ENCODE measurements at regions of chr1 and their contacts with region 1.

Region 1: DNA sequence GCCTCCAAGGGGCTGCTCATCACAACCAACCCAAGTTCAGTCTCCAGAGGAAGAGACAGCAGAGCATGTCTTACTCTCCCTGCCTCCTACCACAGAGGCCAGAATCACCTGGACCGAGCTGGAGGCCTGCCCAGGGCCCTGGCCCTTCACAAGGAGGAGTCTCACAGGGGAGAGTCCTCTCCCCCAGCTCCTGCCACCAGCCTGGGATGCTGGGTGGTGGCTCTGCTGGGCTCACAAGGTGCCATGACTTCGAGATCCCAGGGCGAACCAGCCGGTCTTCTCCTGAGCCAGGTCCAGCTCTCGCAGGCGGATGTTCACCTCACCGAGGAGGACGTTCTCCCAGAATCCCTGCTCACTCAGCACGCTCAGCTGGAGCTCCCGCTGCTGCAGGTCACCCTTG is 13.0 kb upstream of the PPP1R15B start:
- DNase-seq: no peak
- H3K4me3 ChIP-seq: no peak overlapping the region
- H3K27ac ChIP-seq: no peak overlapping the region
- H3K4me1 ChIP-seq: peaks cover 46% of the 10 kb centered on the region
- H3K27me3 ChIP-seq: no peaks in the 10 kb centered on the region
- CTCF ChIP-seq: no peak

Region 2: DNA sequence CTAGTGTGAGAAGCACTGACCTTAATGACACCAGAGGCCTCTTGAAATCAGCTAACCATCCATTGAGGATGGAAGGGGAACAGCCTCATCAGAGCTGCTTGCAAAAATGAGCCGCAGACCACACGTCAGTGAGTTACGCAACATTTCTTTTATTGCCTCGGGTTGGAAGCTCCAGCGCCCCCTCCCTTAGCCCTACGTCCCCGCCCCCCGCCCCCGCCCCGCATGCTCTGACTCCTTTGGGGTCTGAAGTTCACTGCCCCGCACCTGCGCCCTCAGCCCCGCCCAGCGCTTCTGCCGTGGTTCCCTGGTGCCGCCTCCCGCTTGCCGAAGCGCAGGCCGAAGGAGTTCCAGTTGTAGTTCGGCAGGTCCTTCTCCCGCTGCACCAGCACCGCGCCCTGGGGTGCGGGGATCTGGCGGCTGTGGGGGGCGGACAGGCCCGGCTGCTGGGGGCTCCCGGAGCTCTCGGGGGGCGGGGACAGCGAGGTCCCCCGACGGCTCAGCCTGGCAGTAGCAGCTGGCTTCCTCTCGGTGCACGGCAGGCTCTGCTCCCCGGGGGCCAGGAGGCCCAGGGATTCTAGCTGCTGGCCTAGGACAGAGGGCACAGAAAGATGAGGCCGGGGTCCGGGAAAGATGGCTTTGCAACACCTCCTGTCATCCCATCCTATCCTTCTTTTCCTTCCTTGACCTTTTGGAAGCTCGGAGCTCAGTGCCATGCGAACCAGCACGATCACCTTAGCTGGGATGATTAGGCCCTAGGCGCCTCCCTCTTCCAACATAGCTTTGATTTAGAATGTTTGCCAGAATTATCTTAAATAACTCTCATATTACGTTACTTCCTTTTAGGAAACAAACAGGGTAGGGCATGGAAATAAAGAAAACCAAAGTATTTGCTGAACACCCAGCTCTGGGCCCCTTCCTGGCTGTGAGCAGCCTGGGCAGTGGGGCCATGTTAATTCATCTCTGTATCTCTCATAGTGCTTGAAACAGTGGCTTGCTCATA is 234.1 kb before region 1 on chr1:
- CTCF ChIA-PET with region 1: no interaction called
- POLR2A ChIA-PET with region 1: no interaction called
- intact Hi-C with region 1: no loop called
- DNase-seq: peak in 1 of 2 experiments; percentile 52
- H3K4me3 ChIP-seq: no peak overlapping the region
- H3K27ac ChIP-seq: no peak overlapping the region
- H3K4me1 ChIP-seq: peaks cover 20% of the 10 kb centered on the region
- H3K27me3 ChIP-seq: no peaks in the 10 kb centered on the region
- CTCF ChIP-seq: no peak

Region 3: GRCh38 chr1:204384994-204385352 is 39.6 kb before region 1 on chr1:
- CTCF ChIA-PET with region 1: no interaction called
- POLR2A ChIA-PET with region 1: interaction called, 12 read pairs
- intact Hi-C with region 1: no loop called
- DNase-seq: no peak
- H3K4me3 ChIP-seq: no peak overlapping the region
- H3K27ac ChIP-seq: no peak overlapping the region
- H3K4me1 ChIP-seq: peaks cover 18% of the 10 kb centered on the region
- H3K27me3 ChIP-seq: no peaks in the 10 kb centered on the region
- CTCF ChIP-seq: no peak

Region 4: GRCh38 chr1:204411451-204412204 is 13.0 kb before region 1 on chr1 and contains the start of gene PPP1R15B:
- CTCF ChIA-PET with region 1: interaction called, 13 read pairs
- POLR2A ChIA-PET with region 1: interaction called, 4 read pairs
- intact Hi-C with region 1: loop called (anchors 1 kb)
- DNase-seq: peak; percentile 97
- H3K4me3 ChIP-seq: peak within 1 kb of the TSS; percentile 94
- H3K27ac ChIP-seq: peak within 1 kb of the TSS; percentile 89
- H3K4me1 ChIP-seq: peaks cover 28% of the 10 kb centered on the region
- H3K27me3 ChIP-seq: no peaks in the 10 kb centered on the region
- CTCF ChIP-seq: no peak
- total RNA-seq, gene PPP1R15B: 37.3 and 40.9 TPM in 2 replicates

Region 5: DNA sequence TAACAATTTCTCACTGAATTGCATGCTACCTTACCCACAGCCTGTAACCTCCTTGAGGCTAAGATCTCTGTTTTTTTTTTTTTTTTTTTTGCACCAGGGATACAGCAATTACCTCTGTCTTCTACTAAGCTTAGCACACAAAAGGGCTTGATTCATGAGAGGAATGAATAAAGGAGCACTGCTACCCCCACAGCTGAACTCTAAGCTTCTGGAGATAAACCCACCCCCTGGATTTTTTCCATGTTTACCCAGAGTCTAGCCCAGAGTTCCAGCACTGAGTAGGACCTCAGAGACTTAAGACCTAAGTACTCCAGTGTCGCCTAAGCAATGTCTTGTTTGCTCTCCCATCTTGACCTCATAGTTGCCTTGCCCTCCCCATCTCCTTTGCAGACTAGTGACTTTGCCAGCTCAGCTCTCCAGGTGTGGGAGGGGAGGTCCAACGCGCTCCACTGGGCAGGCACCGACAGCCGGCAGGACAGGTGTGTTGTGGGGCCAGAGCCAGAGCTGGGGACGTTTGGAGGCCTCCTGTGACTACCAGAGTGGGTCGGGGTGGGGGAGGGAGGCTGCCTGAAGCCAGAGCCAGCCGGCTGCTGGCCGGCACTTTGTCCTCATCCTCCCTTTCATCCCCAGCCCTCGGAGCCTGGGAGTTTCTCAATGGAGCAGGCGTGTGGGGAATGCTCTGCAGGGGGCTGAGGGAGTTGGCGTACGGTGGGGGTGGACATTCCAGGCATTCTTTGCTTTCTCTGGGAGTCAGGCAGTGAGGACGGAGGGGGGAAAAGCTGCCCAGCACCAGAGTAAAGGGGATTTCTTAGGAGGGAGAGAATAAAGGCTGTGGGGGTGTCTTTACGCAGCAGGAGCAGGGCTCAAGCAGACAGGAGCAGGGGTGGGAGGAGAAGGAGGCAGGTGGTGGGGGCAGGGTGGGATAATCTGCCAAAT is 876.5 kb after region 1 on chr1:
- CTCF ChIA-PET with region 1: no interaction called
- POLR2A ChIA-PET with region 1: no interaction called
- intact Hi-C with region 1: no loop called
- DNase-seq: peak; percentile 78 to 85
- H3K4me3 ChIP-seq: peak overlapping the region; percentile 15; the same call in 1 of the 2 replicates
- H3K27ac ChIP-seq: peak overlapping the region; percentile 68
- H3K4me1 ChIP-seq: peaks cover 53% of the 10 kb centered on the region
- H3K27me3 ChIP-seq: no peaks in the 10 kb centered on the region
- CTCF ChIP-seq: no peak